Posterior cingulate gyrus (tissue), 11 donors: ENCODE measurements at regions of chr17 and their contacts with region 1.

Region 1: GRCh38 chr17:27245230-27245696 is 48.7 kb upstream of the WSB1 start:
- DNase-seq: peak; percentile 61 to 97 (median 82)

Region 2: DNA sequence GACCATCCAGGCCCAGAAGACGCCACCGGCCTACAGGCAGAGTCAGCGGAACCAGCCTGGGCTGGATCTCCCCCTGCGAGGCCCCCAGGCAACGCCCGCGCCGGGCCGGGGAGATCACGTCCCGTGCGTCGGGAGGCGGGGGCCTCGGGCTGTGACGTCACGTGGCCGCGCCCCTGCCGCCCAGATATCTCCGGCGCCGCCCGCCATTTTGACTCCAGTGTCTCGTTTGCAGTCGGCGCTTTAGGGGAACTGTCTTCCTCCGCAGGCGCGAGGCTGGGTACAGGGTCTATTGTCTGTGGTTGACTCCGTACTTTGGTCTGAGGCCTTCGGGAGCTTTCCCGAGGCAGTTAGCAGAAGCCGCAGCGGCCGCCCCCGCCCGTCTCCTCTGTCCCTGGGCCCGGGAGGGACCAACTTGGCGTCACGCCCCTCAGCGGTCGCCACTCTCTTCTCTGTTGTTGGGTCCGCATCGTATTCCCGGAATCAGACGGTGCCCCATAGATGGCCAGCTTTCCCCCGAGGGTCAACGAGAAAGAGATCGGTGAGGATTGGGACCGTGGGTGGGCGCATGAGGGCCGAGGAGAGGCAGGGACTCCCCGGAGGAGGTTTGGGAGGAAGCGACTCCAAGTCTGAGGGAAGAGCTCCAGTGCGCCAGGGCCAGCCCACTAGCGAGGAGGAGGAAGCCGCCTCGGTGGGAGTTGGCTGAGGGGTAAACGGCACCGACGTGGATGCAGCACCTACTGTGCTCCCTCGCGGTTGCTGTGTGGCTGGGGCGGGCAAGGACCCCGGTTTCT is 48.8 kb after region 1 on chr17 and contains the start of gene WSB1:
- intact Hi-C with region 1: loop called (anchors 5 kb)
- DNase-seq: peak; percentile 90 to 99 (median 94)

Region 3: DNA sequence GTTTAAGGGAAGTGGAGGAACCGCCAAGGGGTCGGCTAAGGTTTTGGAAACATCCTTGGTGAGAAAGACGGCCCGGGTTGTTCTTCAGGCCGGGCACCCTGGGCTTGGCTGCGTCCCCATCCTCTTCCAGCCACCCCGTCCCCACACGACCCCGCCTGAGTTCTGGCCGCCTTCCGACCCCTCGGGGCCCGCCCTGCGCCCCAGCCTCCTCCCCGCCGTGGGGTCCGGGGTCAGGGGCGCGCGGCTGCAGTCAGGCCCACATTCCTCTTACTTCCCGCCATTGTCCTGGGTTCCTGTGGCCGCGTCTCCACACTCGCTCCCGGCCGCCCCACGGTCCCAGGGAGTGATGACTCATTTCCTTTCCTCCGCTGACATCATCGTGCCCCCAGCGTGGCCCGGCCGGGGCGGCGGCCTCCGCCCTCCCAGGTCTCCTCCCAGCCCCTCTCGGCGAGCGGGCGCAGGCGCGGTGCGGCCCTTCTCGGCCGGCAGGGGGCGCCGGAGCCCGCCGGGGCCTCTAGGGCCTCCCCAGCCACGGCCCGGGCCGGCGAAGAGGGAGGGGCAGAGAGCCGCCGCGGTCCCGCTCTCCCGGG is 108.3 kb after region 1 on chr17:
- intact Hi-C with region 1: loop called (anchors 5 kb)
- DNase-seq: peak; percentile 50 to 96 (median 75)